Prostate gland (tissue), 2 donors: ENCODE measurements at regions of chr16 and their contacts with region 1.

Region 1: DNA sequence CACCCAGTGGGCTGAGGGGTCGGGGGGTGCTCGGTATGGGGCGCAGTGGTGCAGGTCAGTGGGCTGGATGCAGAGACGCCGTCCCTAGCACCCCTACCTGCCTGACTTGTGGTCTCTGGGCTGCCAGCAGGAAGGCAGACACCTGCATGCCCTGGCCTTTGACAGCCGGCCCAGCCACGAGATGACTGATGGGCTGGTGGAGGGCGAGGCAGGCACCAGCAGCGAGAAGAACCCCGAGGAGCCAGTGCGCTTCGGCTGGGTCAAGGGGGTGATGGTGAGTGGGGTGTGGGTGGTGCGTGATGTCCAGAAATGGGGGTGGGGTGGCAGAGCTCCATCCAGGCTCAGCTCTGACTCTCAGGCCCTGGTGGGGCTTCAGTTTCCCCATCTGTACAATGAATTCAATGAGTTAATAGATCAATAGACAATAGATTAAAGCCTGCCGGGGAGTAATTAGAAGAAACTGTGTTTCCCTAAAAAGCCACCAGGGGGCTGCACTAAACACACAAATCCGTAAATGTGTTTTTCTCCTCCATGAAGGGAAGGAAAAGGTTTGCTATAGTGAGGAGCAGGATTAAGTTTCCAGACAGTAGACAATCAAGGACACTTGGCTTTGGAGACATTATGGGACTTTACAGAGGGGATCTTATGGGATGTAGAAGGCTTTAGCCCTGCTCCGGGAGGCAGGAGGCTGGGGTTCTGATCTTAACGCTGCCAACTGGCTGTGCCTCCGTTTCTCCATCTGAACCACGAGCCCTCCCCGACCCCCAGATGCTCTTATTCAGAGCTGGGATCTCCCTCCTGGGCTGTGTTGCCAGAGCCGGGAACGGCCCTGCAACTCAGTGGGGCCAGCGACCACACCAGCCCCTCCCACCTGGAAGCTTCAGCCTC is 2.2 kb downstream of the SLC12A3 start:
- DNase-seq: peak; percentile 60
- H3K4me3 ChIP-seq: no peak overlapping the region
- H3K27ac ChIP-seq: peak overlapping the region in 1 of 2 donors; percentile 36
- H3K4me1 ChIP-seq: peaks cover 9% of the 10 kb centered on the region
- H3K27me3 ChIP-seq: no peaks in the 10 kb centered on the region
- CTCF ChIP-seq: peak; percentile 55 to 93 (median 89)
- POLR2A ChIP-seq: no peak

Region 2: GRCh38 chr16:56771558-56772279 is 95.5 kb before region 1 on chr16:
- intact Hi-C with region 1: no loop called
- DNase-seq: no peak
- H3K4me3 ChIP-seq: no peak overlapping the region
- H3K27ac ChIP-seq: peak overlapping the region; percentile 44 to 57
- H3K4me1 ChIP-seq: peaks cover 41% of the 10 kb centered on the region
- H3K27me3 ChIP-seq: no peaks in the 10 kb centered on the region
- CTCF ChIP-seq: no peak
- POLR2A ChIP-seq: no peak

Region 3: GRCh38 chr16:56950881-56951771 is 83.9 kb after region 1 on chr16:
- intact Hi-C with region 1: loop called (anchors 5 kb)
- DNase-seq: peak; percentile 60
- H3K4me3 ChIP-seq: no peak overlapping the region
- H3K27ac ChIP-seq: no peak overlapping the region
- H3K4me1 ChIP-seq: no peaks in the 10 kb centered on the region
- H3K27me3 ChIP-seq: no peaks in the 10 kb centered on the region
- CTCF ChIP-seq: peak in 3 of 4 experiments; percentile 68 to 78 (median 69)
- POLR2A ChIP-seq: no peak

Region 4: DNA sequence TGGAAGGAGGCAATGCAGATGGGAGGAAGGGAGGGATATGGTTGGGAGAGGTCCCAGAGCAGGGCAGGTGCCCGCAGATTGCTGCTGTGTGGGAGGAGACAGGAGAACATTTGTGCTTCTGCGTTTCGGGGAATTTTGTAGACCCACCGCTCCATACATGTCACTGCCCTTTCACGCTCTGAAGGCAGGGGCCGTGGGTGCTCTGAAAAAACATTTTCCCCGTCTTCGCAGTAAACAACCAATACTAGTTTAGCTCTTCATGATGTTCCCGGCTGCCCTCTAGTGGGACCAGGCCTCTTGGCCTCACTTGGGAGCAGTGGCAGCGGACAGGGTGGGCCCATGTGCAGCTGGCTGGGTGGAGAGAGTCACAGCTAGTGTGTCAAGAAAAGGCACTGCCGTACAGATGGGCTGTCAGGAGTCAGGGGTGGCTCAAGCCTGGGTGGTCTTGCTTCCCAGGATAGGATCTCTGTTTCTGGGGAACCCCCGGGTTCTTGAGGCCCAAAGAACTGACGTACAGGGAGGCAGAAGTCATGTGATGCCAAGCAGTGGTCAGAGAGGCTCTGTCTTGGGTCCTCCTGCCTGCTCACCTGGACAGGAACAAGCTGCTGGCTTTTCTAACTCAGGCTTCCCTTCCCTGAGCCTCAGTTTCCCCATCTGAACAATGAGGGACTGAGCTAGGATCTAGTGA is 178.7 kb after region 1 on chr16:
- intact Hi-C with region 1: loop called (anchors 2 kb)
- DNase-seq: peak; percentile 50
- H3K4me3 ChIP-seq: no peak overlapping the region
- H3K27ac ChIP-seq: no peak overlapping the region
- H3K4me1 ChIP-seq: no peaks in the 10 kb centered on the region
- H3K27me3 ChIP-seq: no peaks in the 10 kb centered on the region
- CTCF ChIP-seq: peak in 3 of 4 experiments; percentile 26 to 73 (median 54)
- POLR2A ChIP-seq: no peak